Activated CD4-positive, alpha-beta memory T cell treated with anti-CD3 and anti-CD28 coated beads for 36 hours (primary cell): ENCODE measurements at regions of chr1 and their contacts with region 1.

Region 1: DNA sequence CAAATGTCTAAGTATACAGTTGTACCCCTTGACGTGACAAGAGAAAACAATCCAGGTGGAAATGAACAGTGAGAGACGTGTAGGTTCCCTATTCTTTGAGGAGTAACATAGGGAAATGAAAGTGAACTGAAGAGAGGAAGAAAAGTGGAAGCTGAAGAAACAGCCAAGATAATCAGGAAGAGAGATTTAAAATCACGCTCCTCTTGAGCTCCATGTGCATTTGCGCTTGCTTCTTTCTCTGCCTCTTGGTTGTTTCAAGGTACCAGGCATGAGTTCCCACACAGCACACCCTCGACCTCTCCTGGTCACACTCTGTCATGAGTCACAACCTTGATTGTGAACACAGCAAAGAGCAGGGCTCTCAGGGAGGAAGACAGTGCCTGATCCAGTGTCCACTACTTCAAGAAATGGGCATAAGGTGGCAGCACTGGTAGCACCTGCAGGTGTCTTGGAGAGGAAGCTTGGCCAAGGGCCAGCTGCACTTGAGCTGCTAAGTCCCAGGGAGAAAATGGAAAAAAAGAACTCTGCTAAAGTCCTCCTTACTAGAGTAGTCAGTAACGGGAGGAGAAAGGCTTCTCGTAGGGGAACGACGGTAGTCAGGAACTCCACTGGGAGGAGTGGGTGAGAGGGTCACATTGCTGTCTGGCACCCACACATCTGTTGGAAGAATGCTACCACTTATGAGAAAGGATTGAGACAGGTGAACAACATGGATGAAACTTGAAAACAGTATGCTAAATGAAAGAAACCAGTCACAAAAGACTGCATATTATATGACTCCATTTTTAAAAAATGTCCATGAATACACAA is 18.3 kb upstream of the ARID1A start:
- DNase-seq: peak; percentile 76
- H3K4me3 Mint-ChIP-seq: no peak overlapping the region
- H3K27ac Mint-ChIP-seq: no peak overlapping the region
- H3K4me1 Mint-ChIP-seq: peaks cover 18% of the 10 kb centered on the region
- H3K27me3 Mint-ChIP-seq: no peaks in the 10 kb centered on the region

Region 2: DNA sequence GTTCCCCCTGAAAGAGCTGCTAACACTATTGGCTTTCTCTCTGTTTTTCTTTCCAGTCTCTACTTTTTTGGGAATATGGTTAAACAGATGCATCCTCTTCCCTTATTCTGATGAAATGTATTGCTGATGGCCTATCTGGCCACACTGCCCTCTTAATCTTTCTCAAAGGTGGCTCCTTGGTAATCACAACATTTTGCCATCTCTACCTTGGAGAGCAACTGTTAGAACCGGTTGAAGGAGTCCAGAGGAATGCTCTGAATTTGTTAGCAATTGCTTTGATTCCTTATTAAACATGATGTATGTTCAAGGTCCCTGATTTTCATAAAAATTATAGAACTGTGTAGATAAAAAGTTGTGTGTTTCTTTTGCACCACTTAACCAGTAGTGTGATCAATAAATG is 31.8 kb before region 1 on chr1:
- CTCF ChIA-PET with region 1: no interaction called
- POLR2A ChIA-PET with region 1: no interaction called
- intact Hi-C with region 1: no loop called
- DNase-seq: no peak
- H3K4me3 Mint-ChIP-seq: no peak overlapping the region
- H3K27ac Mint-ChIP-seq: no peak overlapping the region
- H3K4me1 Mint-ChIP-seq: no peaks in the 10 kb centered on the region
- H3K27me3 Mint-ChIP-seq: no peaks in the 10 kb centered on the region

Region 3: DNA sequence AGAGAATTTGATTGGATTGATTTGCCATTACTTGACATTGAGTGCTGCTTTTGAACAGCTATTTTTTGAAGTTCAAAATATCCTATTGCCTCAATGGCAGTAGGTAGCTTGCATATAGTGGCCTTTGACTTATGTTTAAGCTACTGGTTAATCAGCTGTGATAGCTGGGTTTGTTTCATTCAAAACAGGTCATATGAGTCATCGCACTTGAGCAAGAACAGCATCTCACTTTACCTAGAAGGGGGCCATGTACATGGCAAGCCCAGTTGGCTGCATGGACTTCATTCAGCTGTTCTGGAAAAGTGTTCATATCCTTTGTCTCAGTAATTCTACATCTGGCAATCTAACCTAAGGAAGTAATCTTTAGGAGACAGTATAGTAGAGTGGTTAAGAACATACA is 10.7 kb before region 1 on chr1:
- CTCF ChIA-PET with region 1: interaction called, 15 read pairs
- POLR2A ChIA-PET with region 1: no interaction called
- intact Hi-C with region 1: no loop called
- DNase-seq: peak; percentile 25
- H3K4me3 Mint-ChIP-seq: no peak overlapping the region
- H3K27ac Mint-ChIP-seq: peak overlapping the region; percentile 33
- H3K4me1 Mint-ChIP-seq: peaks cover 11% of the 10 kb centered on the region
- H3K27me3 Mint-ChIP-seq: no peaks in the 10 kb centered on the region